ENCODE measurements at regions of chr18 and their contacts with region 1.

Region 1: GRCh38 chr18:58117786-58118403 is 73.9 kb downstream of the NEDD4L start:
- DNase-seq: peak; percentile 69 to 82
- ATAC-seq: peak; percentile 86 to 95
- H3K4me3 ChIP-seq: no peak overlapping the region
- H3K27ac ChIP-seq: peak overlapping the region; percentile 62 to 76
- H3K4me1 ChIP-seq: peaks cover 27% of the 10 kb centered on the region
- CTCF ChIP-seq: no peak
- EP300 ChIP-seq: no peak
- POLR2A ChIP-seq: no peak
- RAD21 ChIP-seq: no peak

Region 2: DNA sequence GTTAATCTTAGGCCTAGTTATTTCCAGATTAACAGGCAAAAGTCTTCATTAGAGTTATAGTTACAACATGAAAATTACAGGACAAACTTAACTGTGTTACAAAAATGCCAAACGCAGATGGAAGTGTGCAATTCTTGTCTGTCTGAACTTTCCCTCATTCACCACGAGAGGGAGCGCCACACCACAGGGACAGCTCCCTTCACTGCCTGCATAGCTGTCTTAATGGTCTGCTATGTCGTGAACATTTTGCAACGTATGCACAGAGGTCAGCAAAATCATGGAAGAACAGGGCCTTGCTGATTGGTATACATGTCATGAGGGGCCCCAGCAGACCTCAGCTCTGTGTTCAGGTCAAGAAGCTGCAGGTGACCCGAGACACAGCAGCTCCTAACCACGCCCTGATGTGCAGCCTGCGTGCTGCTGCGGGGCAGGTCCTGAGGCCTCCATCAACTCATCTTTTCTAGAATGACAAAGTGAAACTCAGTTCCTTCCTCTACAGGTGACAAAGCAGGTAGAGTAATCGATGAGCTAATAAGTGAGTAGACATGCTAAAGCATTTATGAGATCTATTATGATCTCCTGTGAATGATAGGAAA is 236.0 kb before region 1 on chr18:
- CTCF ChIA-PET with region 1: interaction called, 13 read pairs
- POLR2A ChIA-PET with region 1: no interaction called
- DNase-seq: peak; percentile 20 to 84
- ATAC-seq: peak; percentile 94 to 98
- H3K4me3 ChIP-seq: no peak overlapping the region
- H3K27ac ChIP-seq: peak overlapping the region; percentile 67 to 77
- H3K4me1 ChIP-seq: peaks cover 16% of the 10 kb centered on the region
- CTCF ChIP-seq: peak; percentile 83
- EP300 ChIP-seq: no peak
- POLR2A ChIP-seq: no peak
- RAD21 ChIP-seq: peak; percentile 94 to 95

Region 3: DNA sequence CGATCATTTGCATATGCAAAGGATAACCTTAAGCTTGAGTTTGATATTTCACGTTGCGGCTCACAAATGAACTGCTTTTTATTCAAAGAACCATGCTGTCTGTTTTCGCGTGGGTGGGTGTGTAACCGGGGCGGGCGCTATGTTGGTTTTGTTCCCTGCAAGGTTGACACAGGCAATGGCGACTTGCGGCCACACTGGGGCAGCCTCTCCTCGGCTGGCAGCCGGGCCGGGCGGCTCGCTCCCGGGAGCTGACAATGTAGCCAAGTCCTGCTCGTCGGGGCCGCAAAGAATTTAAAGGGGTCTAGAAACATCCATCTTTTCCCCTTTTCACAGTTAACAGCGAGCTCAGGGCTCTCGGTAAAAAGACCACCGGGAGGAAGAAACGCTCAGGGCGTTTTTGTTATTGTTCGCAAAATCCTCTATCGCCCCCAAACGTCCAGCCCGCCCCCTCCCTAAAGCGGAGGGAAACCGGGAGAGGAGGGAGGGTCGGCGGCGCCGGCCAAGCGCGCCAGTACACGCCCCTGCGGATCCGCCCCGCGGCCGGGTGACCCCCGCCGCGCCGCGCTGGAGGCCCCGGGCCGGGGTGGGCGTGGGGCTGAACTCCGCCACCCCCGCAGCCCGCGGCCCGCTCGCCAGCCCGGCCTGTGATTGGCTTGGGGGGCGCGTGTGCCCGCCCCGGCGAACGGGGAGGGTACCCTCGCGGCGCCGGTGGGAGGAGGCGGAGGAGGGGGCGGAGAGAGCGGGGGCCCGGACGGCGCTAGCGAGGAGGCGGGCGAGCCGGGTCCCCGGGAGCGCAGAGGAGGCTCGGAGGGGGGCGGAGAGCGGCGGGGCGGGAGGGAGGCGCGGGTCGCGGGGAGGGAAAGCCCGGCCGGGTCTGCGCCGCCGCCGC is 74.2 kb before region 1 on chr18 and contains the start of gene NEDD4L:
- CTCF ChIA-PET with region 1: interaction called, 24 read pairs
- POLR2A ChIA-PET with region 1: interaction called, 5 read pairs
- DNase-seq: peak; percentile 55 to 85
- ATAC-seq: peak; percentile 76 to 85
- H3K4me3 ChIP-seq: peak within 1 kb of the TSS; percentile 86
- H3K27ac ChIP-seq: peak within 1 kb of the TSS; percentile 91 to 94
- H3K4me1 ChIP-seq: peaks cover 17% of the 10 kb centered on the region
- CTCF ChIP-seq: peak; percentile 72
- EP300 ChIP-seq: no peak
- POLR2A ChIP-seq: no peak
- RAD21 ChIP-seq: peak; percentile 76 to 88
- polyA plus RNA-seq, gene NEDD4L: 36.5 TPM in 2 replicates

Region 4: GRCh38 chr18:58051765-58052460 is 66.0 kb before region 1 on chr18:
- CTCF ChIA-PET with region 1: interaction called, 11 read pairs
- POLR2A ChIA-PET with region 1: no interaction called
- DNase-seq: peak in 1 of 2 experiments; percentile 25
- ATAC-seq: peak; percentile 64 to 70; a peak in 4 of 6 replicates
- H3K4me3 ChIP-seq: no peak overlapping the region
- H3K27ac ChIP-seq: peak overlapping the region; percentile 11 to 53; a peak in 3 of 6 replicates
- H3K4me1 ChIP-seq: peaks cover 39% of the 10 kb centered on the region
- CTCF ChIP-seq: peak; percentile 52
- EP300 ChIP-seq: no peak
- POLR2A ChIP-seq: no peak
- RAD21 ChIP-seq: peak; percentile 44; a peak in 4 of 5 replicates

Region 5: DNA sequence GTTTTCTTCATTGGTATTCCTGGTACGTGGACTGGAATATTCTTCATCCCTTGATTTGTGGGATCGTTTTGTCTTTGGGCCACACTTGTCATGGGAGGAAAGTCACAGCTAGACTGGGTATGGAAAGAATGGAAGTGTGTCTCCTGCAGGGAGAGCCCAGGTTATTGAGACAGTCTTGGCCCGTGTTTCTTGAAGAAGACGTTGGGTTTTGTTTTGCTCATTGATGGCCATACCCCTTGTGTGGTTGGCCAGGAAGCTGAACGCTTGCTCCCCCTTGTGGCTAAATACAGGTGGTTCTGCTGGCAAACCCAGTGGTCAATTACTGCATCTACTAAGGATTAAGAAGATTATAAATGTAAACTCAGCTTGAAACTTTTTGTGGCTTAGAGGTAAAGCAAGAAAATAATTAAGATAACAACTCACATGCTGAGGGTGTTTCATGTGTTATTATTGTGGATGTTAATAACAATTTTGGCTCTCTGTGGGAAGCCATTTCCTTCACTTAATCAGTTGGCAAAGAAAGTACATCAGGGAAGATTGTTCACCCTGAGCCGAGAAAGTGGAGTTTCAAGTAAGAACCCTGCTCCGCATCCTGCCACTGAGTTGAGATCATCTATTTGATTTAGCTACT is 17.9 kb after region 1 on chr18:
- CTCF ChIA-PET with region 1: interaction called, 12 read pairs
- POLR2A ChIA-PET with region 1: no interaction called
- DNase-seq: peak; percentile 61 to 71
- ATAC-seq: peak; percentile 78 to 93; a peak in 4 of 6 replicates
- H3K4me3 ChIP-seq: no peak overlapping the region
- H3K27ac ChIP-seq: 0 out of 6 replicates have a peak overlapping the region, but pooled peaks of 1 of the 2 experiments have one; percentile 14
- H3K4me1 ChIP-seq: 0 out of 3 replicates have a peak, but pooled peaks cover 4% of the 10 kb centered on the region
- CTCF ChIP-seq: peak; percentile 60
- EP300 ChIP-seq: no peak
- POLR2A ChIP-seq: no peak
- RAD21 ChIP-seq: peak; percentile 48 to 66

Measured in A549 (cell line).